Activated CD4-positive, alpha-beta T cell treated with anti-CD3 and anti-CD28 coated beads for 36 hours (primary cell): ENCODE measurements at regions of chr4 and their contacts with region 1.

Region 1: GRCh38 chr4:10461091-10461849 is 4.0 kb upstream of the ZNF518B start:
- DNase-seq: peak; percentile 87
- ATAC-seq: peak; percentile 84
- H3K4me3 Mint-ChIP-seq: peak overlapping the region; percentile 75
- H3K27ac Mint-ChIP-seq: no peak overlapping the region
- H3K4me1 Mint-ChIP-seq: peaks cover 25% of the 10 kb centered on the region
- H3K27me3 Mint-ChIP-seq: peaks cover 39% of the 10 kb centered on the region

Region 2: GRCh38 chr4:9691238-9692065 is 769.8 kb before region 1 on chr4:
- CTCF ChIA-PET with region 1: no interaction called
- POLR2A ChIA-PET with region 1: no interaction called
- intact Hi-C with region 1: loop called in 1 of 2 experiments (anchors 5 kb)
- DNase-seq: peak; percentile 95
- ATAC-seq: peak; percentile 100
- H3K4me3 Mint-ChIP-seq: peak overlapping the region; percentile 76
- H3K27ac Mint-ChIP-seq: peak overlapping the region; percentile 76
- H3K4me1 Mint-ChIP-seq: peaks cover 23% of the 10 kb centered on the region
- H3K27me3 Mint-ChIP-seq: no peaks in the 10 kb centered on the region

Region 3: GRCh38 chr4:10180927-10181782 is 280.1 kb before region 1 on chr4:
- CTCF ChIA-PET with region 1: no interaction called
- POLR2A ChIA-PET with region 1: no interaction called
- intact Hi-C with region 1: loop called (anchors 1 to 2 kb)
- DNase-seq: peak; percentile 62
- ATAC-seq: peak; percentile 97
- H3K4me3 Mint-ChIP-seq: peak overlapping the region; percentile 26
- H3K27ac Mint-ChIP-seq: peak overlapping the region; percentile 79
- H3K4me1 Mint-ChIP-seq: peaks cover 31% of the 10 kb centered on the region
- H3K27me3 Mint-ChIP-seq: no peaks in the 10 kb centered on the region

Region 4: DNA sequence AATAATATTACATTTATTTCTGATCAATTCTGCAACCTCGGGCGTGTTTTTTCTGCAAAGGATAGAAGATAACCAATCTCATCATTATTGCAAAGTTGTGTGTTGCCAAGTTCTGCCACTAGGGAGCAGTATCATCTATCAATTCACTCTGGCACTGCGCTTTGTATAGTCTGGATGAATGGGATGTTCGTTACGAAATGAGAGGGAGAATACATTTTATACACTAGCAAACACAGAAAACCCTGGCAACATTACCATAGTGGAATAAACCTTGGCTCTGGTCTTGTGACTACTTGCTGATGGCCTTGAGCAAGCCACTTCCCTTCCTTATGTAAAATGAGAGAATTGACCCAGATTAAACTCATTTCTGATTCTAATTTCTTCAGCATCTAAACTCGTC is 93.4 kb after region 1 on chr4:
- CTCF ChIA-PET with region 1: interaction called, 12 read pairs
- POLR2A ChIA-PET with region 1: no interaction called
- intact Hi-C with region 1: no loop called
- DNase-seq: peak; percentile 64
- ATAC-seq: peak; percentile 61
- H3K4me3 Mint-ChIP-seq: no peak overlapping the region
- H3K27ac Mint-ChIP-seq: no peak overlapping the region
- H3K4me1 Mint-ChIP-seq: peaks cover 3% of the 10 kb centered on the region
- H3K27me3 Mint-ChIP-seq: peaks cover 11% of the 10 kb centered on the region

Region 5: DNA sequence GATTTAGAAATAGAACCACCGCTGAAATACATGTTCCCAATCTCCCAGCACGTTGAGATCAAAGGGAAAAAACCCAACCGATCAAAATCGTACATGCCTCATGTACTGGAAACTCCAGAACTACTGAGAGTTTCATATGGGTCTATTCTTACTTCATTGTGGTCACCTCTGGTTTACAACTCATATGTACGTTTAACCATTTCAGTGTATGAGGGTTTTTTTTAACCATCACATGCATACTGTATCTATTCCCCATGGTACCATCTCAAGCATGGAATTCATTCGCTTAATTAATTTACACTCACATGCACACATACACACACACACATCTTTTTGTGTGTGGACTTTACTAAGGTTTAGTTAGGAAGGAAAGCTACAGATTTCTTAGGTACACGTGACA is 269.3 kb after region 1 on chr4:
- CTCF ChIA-PET with region 1: interaction called, 3 read pairs
- POLR2A ChIA-PET with region 1: no interaction called
- intact Hi-C with region 1: loop called (anchors 5 kb)
- DNase-seq: no peak
- ATAC-seq: peak; percentile 60
- H3K4me3 Mint-ChIP-seq: no peak overlapping the region
- H3K27ac Mint-ChIP-seq: peak overlapping the region; percentile 26
- H3K4me1 Mint-ChIP-seq: peaks cover 58% of the 10 kb centered on the region
- H3K27me3 Mint-ChIP-seq: peaks cover 2% of the 10 kb centered on the region